ENCODE measurements at regions of chr21 and their contacts with region 1.

Region 1: GRCh38 chr21:21851657-21852056 is 853.4 kb downstream of the NCAM2 start:
- DNase-seq: peak; percentile 49
- ATAC-seq: peak; percentile 80
- H3K4me3 ChIP-seq: no peak overlapping the region
- H3K27ac ChIP-seq: no peak overlapping the region
- H3K4me1 ChIP-seq: 0 out of 2 replicates have a peak, but pooled peaks cover 4% of the 10 kb centered on the region
- H3K27me3 ChIP-seq: no peaks in the 10 kb centered on the region
- CTCF ChIP-seq: no peak

Region 2: DNA sequence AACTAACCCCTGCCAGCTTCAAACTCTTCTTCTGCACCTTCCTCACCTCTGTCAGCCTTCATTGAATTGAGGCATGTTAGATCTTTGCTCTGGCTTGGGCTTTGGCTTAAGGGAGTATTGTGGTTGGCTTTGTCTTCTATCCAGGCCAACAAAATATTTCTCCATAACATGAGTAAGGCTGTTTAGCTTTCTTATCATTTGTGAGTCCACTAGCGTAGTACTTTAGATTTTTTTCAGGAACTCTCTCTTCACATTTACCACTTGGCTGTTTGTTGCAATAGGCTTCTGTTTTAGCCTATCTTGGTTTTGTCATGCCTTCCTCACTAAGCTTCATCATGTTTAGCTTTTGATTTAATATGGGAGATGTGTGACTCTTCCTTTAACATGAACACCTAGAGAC is 435.9 kb before region 1 on chr21:
- CTCF ChIA-PET with region 1: no interaction called
- POLR2A ChIA-PET with region 1: no interaction called
- intact Hi-C with region 1: no loop called
- DNase-seq: no peak
- ATAC-seq: no peak
- H3K4me3 ChIP-seq: no peak overlapping the region
- H3K27ac ChIP-seq: no peak overlapping the region
- H3K4me1 ChIP-seq: no peaks in the 10 kb centered on the region
- H3K27me3 ChIP-seq: no peaks in the 10 kb centered on the region
- CTCF ChIP-seq: no peak

Region 3: DNA sequence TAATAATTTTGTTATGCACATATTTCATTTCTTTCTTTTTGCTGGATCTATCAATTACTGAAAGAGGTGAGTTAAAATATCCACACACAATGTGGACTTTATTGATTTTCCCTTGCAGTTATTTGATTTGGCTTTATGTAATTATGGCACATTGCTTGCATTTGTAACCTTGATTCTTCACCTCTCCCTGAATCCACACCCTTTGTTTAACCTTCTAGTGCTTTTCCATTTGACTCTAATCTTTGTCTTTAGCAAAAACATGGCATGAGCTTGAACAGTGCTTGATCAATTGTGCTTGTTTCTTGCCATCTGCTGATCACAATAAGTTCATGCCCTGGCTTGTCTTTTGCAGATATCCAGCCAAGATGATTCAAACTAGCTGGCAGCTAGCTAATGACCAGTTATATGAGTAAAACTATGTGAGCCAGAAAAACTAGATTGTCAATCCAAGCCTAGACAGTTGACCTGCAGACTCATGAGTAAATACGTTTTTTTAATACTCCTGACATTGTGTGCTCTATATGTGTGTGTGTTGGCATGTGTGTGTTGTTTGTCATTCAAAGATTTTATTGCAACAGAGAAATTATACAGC is 45.7 kb after region 1 on chr21:
- CTCF ChIA-PET with region 1: no interaction called
- POLR2A ChIA-PET with region 1: no interaction called
- intact Hi-C with region 1: loop called (anchors 1 kb)
- DNase-seq: peak; percentile 73
- ATAC-seq: peak; percentile 89
- H3K4me3 ChIP-seq: no peak overlapping the region
- H3K27ac ChIP-seq: no peak overlapping the region
- H3K4me1 ChIP-seq: 0 out of 2 replicates have a peak, but pooled peaks cover 4% of the 10 kb centered on the region
- H3K27me3 ChIP-seq: no peaks in the 10 kb centered on the region
- CTCF ChIP-seq: no peak

Measured in PC-3 (cell line).